IMR-90 (cell line): ENCODE measurements at regions of chr9 and their contacts with region 1.

Region 1: GRCh38 chr9:5949103-5949699 is 58.5 kb downstream of the MLANA start:
- DNase-seq: peak; percentile 10
- ATAC-seq: no peak
- H3K4me3 ChIP-seq: no peak overlapping the region
- H3K27ac ChIP-seq: no peak overlapping the region
- H3K4me1 ChIP-seq: 0 out of 2 replicates have a peak, but pooled peaks cover 1% of the 10 kb centered on the region
- H3K27me3 ChIP-seq: no peaks in the 10 kb centered on the region
- CTCF ChIP-seq: no peak
- POLR2A ChIP-seq: no peak
- RAD21 ChIP-seq: no peak

Region 2: GRCh38 chr9:5909976-5910375 is 39.2 kb before region 1 on chr9:
- CTCF ChIA-PET with region 1: no interaction called
- POLR2A ChIA-PET with region 1: no interaction called
- dilution Hi-C with region 1: no loop called
- in situ Hi-C with region 1: no loop called
- intact Hi-C with region 1: loop called (anchors 5 kb)
- DNase-seq: peak; percentile 50
- ATAC-seq: peak; percentile 27; the same call in 1 of the 2 replicates
- H3K4me3 ChIP-seq: no peak overlapping the region
- H3K27ac ChIP-seq: no peak overlapping the region
- H3K4me1 ChIP-seq: no peaks in the 10 kb centered on the region; the same call in 1 of the 2 replicates
- H3K27me3 ChIP-seq: no peaks in the 10 kb centered on the region
- CTCF ChIP-seq: no peak
- POLR2A ChIP-seq: no peak
- RAD21 ChIP-seq: no peak